ENCODE measurements at regions of chr3 and their contacts with region 1.

Region 1: GRCh38 chr3:25648107-25648535 is 16.6 kb downstream of the TOP2B start:
- DNase-seq: peak in 4 of 5 donors; percentile 45 to 66 (median 65)
- ATAC-seq: peak; percentile 74 to 95 (median 91)
- H3K4me3 ChIP-seq: no peak overlapping the region
- H3K27ac ChIP-seq: no peak overlapping the region
- H3K4me1 ChIP-seq: peaks cover 0 to 39% (median 17%) of the 10 kb centered on the region in 12 donors
- H3K27me3 ChIP-seq: no peaks in the 10 kb centered on the region
- CTCF ChIP-seq: peak; percentile 78 to 90 (median 86)
- POLR2A ChIP-seq: no peak

Region 2: GRCh38 chr3:25441234-25441856 is 206.8 kb before region 1 on chr3:
- intact Hi-C with region 1: no loop called
- DNase-seq: no peak
- ATAC-seq: no peak
- H3K4me3 ChIP-seq: no peak overlapping the region
- H3K27ac ChIP-seq: no peak overlapping the region
- H3K4me1 ChIP-seq: peaks cover 0 to 37% (median 13%) of the 10 kb centered on the region in 12 donors
- H3K27me3 ChIP-seq: no peaks in the 10 kb centered on the region
- CTCF ChIP-seq: peak in 11 of 12 donors; percentile 37 to 65 (median 55)
- POLR2A ChIP-seq: no peak

Region 3: GRCh38 chr3:25782938-25783660 is 135.0 kb after region 1 on chr3 and contains the start of gene NGLY1:
- intact Hi-C with region 1: no loop called
- DNase-seq: peak; percentile 86 to 93 (median 90)
- ATAC-seq: peak; percentile 92 to 98 (median 98)
- H3K4me3 ChIP-seq: peak within 1 kb of the TSS; percentile 74 to 97 (median 88)
- H3K27ac ChIP-seq: peak within 1 kb of the TSS; percentile 63 to 94 (median 90)
- H3K4me1 ChIP-seq: peaks cover 0 to 37% (median 13%) of the 10 kb centered on the region in 12 donors
- H3K27me3 ChIP-seq: no peaks in the 10 kb centered on the region
- CTCF ChIP-seq: peak in 6 of 12 donors; percentile 18 to 43 (median 30)
- POLR2A ChIP-seq: peak in 1 of 2 donors; percentile 96
- total RNA-seq, gene NGLY1: 18.5 to 41.0 (median 31.0) TPM

Region 4: DNA sequence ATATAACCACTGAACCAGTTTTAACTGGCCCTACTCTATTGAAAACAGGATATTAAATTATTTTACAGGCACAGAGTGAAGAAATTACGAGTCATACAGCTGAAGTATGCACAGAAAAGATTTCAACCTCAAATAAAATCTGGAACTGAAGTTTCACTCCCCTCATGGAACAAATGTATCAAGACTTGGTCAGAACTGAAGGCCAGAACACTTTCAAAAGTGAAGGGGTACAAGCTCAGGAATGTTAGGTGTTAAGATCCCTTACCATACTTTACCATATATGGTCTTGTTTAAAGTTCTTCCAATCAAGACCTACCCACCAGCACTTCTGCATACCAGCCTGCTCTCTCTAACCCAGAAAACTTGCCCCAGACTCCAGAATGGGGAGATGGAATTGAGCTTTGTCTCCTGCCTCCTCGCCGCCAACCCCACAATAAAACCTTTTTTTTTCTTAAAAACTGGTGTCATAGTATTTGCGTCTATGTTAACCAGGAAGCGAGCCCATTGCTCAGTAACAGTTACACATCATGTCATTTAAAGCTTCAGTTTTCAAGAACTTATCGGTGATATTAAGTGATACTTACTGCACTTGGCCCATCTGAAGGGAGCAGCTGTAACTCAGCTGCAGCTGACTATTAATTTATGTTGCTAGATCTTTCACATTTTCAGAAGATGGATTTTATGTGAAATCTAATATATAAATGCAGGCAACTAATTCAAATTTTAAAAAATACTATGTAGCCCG is 201.7 kb after region 1 on chr3:
- intact Hi-C with region 1: loop called in 6 of 10 experiments (anchors 5 kb)
- DNase-seq: no peak
- ATAC-seq: no peak
- H3K4me3 ChIP-seq: no peak overlapping the region
- H3K27ac ChIP-seq: no peak overlapping the region
- H3K4me1 ChIP-seq: no peaks in the 10 kb centered on the region
- H3K27me3 ChIP-seq: no peaks in the 10 kb centered on the region
- CTCF ChIP-seq: no peak
- POLR2A ChIP-seq: no peak

Region 5: DNA sequence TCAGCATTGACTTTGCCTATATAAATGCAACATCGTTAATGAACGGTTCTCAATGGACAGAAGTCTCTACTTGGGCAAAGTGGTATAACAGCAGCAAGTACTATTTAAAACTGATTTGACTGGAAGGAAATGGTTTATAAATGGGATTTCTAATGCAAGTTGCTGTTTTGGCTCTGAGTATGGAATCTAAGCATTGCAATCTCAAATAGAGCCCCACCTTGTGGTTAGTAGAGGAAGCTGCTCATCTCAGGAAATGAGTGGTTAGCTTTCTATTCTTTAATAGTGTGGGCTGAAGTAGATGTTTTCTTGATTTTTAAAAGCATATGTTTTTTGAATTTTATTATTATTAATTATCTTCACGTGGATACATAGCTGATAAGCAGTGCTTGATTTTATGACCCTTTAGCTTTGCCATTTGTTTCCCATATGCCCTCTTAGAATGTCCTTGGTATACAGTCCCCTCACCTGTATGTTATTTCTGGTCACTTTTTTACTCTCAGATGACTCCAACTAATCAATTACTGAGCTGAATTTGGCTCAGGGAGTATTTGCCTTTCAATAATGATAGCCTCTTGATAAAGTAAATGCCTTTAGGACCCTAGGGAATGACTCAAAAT is 208.9 kb after region 1 on chr3:
- intact Hi-C with region 1: loop called (anchors 1 to 5 kb)
- DNase-seq: no peak
- ATAC-seq: peak in 1 of 4 donors; percentile 32
- H3K4me3 ChIP-seq: no peak overlapping the region
- H3K27ac ChIP-seq: no peak overlapping the region
- H3K4me1 ChIP-seq: no peaks in the 10 kb centered on the region
- H3K27me3 ChIP-seq: no peaks in the 10 kb centered on the region
- CTCF ChIP-seq: peak; percentile 52 to 75 (median 66)
- POLR2A ChIP-seq: no peak

Region 6: GRCh38 chr3:26015752-26016151 is 367.6 kb after region 1 on chr3:
- intact Hi-C with region 1: no loop called
- DNase-seq: no peak
- ATAC-seq: no peak
- H3K4me3 ChIP-seq: no peak overlapping the region
- H3K27ac ChIP-seq: no peak overlapping the region
- H3K4me1 ChIP-seq: peaks cover 0 to 4% (median 0%) of the 10 kb centered on the region in 12 donors
- H3K27me3 ChIP-seq: no peaks in the 10 kb centered on the region
- CTCF ChIP-seq: no peak
- POLR2A ChIP-seq: no peak

Region 7: GRCh38 chr3:26312816-26313215 is 664.7 kb after region 1 on chr3:
- intact Hi-C with region 1: no loop called
- DNase-seq: no peak
- ATAC-seq: no peak
- H3K4me3 ChIP-seq: no peak overlapping the region
- H3K27ac ChIP-seq: no peak overlapping the region
- H3K4me1 ChIP-seq: no peaks in the 10 kb centered on the region
- H3K27me3 ChIP-seq: no peaks in the 10 kb centered on the region
- CTCF ChIP-seq: no peak
- POLR2A ChIP-seq: no peak

Measured in heart left ventricle (tissue), 16 donors.